CD4-positive, alpha-beta T cell (primary cell): ENCODE measurements at regions of chr20 and their contacts with region 1.

Region 1: GRCh38 chr20:815914-816606 is 17.5 kb upstream of the FAM110A start:
- DNase-seq: peak; percentile 49 to 87 (median 61)
- ATAC-seq: peak; percentile 64
- H3K4me3 ChIP-seq: no peak overlapping the region
- H3K4me3 Mint-ChIP-seq: no peak overlapping the region
- H3K27ac ChIP-seq: no peak overlapping the region
- H3K27ac Mint-ChIP-seq: peak overlapping the region; percentile 12
- H3K4me1 ChIP-seq: peaks cover 4% of the 10 kb centered on the region
- H3K4me1 Mint-ChIP-seq: peaks cover 4% of the 10 kb centered on the region
- H3K27me3 ChIP-seq: no peaks in the 10 kb centered on the region
- H3K27me3 Mint-ChIP-seq: peaks cover 26% of the 10 kb centered on the region
- CTCF ChIP-seq: peak; percentile 98

Region 2: DNA sequence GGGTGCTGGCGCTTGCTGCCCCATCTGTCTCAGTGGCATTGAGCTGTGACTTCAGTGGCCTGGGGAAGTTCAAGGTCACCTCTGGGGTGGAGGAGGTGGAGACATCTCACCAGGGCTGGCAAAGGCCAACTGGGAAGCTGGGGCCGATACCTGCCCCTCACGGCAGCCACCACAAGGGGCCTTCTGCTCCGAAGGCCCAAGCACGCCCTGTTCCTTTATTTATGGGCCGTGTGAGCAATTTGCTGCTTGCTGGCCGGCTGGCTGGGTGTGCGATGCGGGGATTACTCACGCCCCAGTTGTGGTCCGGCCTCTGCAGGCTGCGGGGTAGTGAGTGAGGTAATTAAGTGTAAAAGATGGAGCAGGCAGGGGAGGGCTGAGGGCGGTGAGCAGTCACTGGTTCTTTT is 127.2 kb before region 1 on chr20:
- CTCF ChIA-PET with region 1: no interaction called
- POLR2A ChIA-PET with region 1: no interaction called
- intact Hi-C with region 1: no loop called
- DNase-seq: no peak
- ATAC-seq: no peak
- H3K4me3 ChIP-seq: no peak overlapping the region
- H3K4me3 Mint-ChIP-seq: no peak overlapping the region
- H3K27ac ChIP-seq: no peak overlapping the region
- H3K27ac Mint-ChIP-seq: no peak overlapping the region
- H3K4me1 ChIP-seq: no peaks in the 10 kb centered on the region
- H3K4me1 Mint-ChIP-seq: no peaks in the 10 kb centered on the region
- H3K27me3 ChIP-seq: no peaks in the 10 kb centered on the region
- H3K27me3 Mint-ChIP-seq: peaks cover 41% of the 10 kb centered on the region
- CTCF ChIP-seq: no peak

Region 3: DNA sequence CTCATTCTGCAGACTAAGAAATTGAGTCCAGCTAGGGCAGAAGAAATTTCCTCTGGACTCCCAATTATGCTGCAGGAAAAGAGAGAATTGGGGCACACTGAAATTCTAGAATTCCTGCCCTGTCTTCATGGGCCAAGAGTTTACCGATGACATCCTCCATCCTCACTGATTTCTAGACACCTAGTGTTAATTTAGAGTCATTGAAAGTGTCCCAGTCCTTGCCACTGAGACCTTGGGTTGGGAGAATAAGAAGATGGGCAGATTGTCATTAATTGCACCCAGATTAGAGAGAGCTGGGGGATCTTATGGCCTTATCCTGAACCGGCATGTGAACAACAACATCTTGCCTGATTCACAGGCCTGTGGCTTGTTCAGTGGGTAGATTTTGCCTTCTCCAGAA is 71.1 kb after region 1 on chr20:
- CTCF ChIA-PET with region 1: no interaction called
- POLR2A ChIA-PET with region 1: no interaction called
- intact Hi-C with region 1: loop called in 1 of 2 experiments (anchors 2 kb)
- DNase-seq: no peak
- ATAC-seq: no peak
- H3K4me3 ChIP-seq: no peak overlapping the region
- H3K4me3 Mint-ChIP-seq: no peak overlapping the region
- H3K27ac ChIP-seq: no peak overlapping the region
- H3K27ac Mint-ChIP-seq: no peak overlapping the region
- H3K4me1 ChIP-seq: peaks cover 5% of the 10 kb centered on the region
- H3K4me1 Mint-ChIP-seq: no peaks in the 10 kb centered on the region
- H3K27me3 ChIP-seq: peaks cover 0 to 9% of the 10 kb centered on the region in 2 experiments
- H3K27me3 Mint-ChIP-seq: peaks cover 6% of the 10 kb centered on the region
- CTCF ChIP-seq: no peak

Region 4: DNA sequence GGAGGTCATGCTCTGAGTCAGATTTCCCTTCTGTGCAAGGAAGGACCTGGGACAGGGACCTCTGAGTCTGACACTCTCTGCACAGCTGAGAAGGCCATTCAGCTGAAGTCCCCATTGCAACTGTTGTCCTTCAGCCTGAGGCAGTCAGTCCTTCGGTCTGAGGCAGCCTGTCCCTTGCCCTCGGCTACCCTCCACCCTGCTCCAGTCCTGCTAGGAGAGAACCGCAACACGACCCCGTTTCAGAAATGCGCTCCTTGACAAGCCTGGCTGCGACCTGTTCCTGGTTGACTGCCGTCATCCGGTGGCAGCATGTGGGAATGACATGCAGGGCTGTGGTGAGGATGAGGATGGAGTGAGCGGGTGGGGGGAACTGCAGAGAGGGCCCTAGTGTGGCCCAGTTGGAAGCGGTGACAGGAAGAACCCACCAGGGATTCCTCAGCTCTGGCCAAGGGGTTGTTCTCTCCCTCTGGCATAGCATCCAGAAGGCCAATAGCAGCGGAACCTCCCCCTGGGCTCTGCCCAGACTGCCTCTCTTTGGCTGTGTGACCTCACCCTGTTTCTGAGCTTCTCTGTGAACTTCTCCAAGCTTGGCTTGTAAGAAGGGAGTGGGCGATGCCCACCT is 140.4 kb after region 1 on chr20:
- CTCF ChIA-PET with region 1: interaction called, 27 read pairs
- POLR2A ChIA-PET with region 1: interaction called, 4 read pairs
- intact Hi-C with region 1: loop called (anchors 1 kb)
- DNase-seq: peak; percentile 56 to 84 (median 68)
- ATAC-seq: peak; percentile 88
- H3K4me3 ChIP-seq: no peak overlapping the region
- H3K4me3 Mint-ChIP-seq: no peak overlapping the region
- H3K27ac ChIP-seq: no peak overlapping the region
- H3K27ac Mint-ChIP-seq: no peak overlapping the region
- H3K4me1 ChIP-seq: peaks cover 4% of the 10 kb centered on the region
- H3K4me1 Mint-ChIP-seq: peaks cover 5% of the 10 kb centered on the region
- H3K27me3 ChIP-seq: peaks cover 11 to 17% of the 10 kb centered on the region in 2 experiments
- H3K27me3 Mint-ChIP-seq: peaks cover 66% of the 10 kb centered on the region
- CTCF ChIP-seq: peak; percentile 99

Region 5: DNA sequence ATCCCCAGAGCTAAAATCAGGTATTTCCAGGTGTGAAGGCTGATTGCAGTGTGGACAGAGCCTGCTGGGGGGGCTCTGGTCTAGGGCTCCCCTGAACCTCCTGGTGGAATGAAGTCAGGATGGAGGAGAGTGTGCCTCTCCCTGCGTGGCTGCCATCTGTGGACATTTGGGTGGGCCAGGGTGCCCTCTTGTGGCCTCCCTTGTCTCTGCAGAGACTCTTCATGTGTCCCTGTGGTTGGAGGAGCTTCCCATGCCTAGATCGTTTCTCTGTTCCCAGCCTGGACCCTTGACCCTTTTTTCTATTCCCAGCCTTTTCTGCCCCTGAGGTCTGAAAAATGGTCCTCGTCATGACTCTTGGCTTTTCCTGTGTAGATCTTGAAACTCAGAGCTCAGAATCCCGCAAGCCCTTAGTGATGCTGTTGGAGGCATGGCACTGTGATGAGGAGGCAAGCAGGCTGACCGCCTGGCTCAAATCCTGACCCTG is 292.4 kb after region 1 on chr20:
- CTCF ChIA-PET with region 1: interaction called, 3 read pairs
- POLR2A ChIA-PET with region 1: no interaction called
- intact Hi-C with region 1: loop called (anchors 1 to 5 kb)
- DNase-seq: peak; percentile 17 to 69 (median 44)
- ATAC-seq: peak; percentile 79
- H3K4me3 ChIP-seq: no peak overlapping the region
- H3K4me3 Mint-ChIP-seq: no peak overlapping the region
- H3K27ac ChIP-seq: no peak overlapping the region
- H3K27ac Mint-ChIP-seq: no peak overlapping the region
- H3K4me1 ChIP-seq: peaks cover 6% of the 10 kb centered on the region
- H3K4me1 Mint-ChIP-seq: peaks cover 7% of the 10 kb centered on the region
- H3K27me3 ChIP-seq: no peaks in the 10 kb centered on the region
- H3K27me3 Mint-ChIP-seq: peaks cover 6% of the 10 kb centered on the region
- CTCF ChIP-seq: peak; percentile 67